HEK293T (cell line): ENCODE measurements at regions of chr19 and their contacts with region 1.

Region 1: GRCh38 chr19:50804420-50805272 is 14.4 kb downstream of the ACP4 start:
- DNase-seq: peak; percentile 97

Region 2: DNA sequence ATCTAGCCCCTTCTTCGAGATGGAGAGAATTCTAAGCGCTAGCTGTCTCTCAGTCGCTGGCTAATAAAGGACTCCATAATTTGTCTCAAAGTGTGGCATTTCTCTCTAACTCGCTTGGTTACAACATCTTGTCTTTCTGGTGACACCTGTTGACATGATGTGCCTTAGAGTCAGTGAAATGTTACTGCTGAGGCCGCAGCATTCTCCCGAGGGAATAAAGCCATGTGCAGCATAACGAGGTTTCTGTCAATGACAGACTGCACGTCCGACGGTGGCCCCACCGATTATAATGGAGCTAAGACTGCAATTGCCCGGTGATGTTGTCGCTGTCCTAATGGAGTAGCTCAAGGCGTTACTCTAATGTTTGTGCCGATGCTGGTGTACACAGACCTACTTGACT is 54.6 kb before region 1 on chr19:
- CTCF ChIA-PET with region 1: no interaction called
- POLR2A ChIA-PET with region 1: no interaction called
- DNase-seq: no peak

Region 3: DNA sequence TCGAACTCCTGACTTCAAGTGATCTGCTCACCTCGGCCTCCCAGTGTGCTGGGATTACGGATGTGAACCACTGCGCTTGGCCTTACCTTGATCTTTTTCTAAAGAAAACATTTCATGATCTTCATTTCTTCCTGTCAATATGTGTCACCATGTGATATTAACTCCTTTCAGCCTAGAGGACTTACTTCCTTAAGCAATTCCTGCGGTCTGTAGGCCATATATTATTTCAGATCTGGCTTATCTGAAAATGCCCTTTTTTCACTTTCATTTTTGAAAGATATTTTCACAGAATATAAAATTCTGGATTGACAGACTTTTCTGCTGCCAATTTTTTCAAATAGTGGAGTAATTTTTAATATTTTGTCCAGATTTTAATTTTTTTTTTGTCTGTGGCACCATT is 36.4 kb before region 1 on chr19:
- CTCF ChIA-PET with region 1: no interaction called
- POLR2A ChIA-PET with region 1: no interaction called
- DNase-seq: no peak

Region 4: DNA sequence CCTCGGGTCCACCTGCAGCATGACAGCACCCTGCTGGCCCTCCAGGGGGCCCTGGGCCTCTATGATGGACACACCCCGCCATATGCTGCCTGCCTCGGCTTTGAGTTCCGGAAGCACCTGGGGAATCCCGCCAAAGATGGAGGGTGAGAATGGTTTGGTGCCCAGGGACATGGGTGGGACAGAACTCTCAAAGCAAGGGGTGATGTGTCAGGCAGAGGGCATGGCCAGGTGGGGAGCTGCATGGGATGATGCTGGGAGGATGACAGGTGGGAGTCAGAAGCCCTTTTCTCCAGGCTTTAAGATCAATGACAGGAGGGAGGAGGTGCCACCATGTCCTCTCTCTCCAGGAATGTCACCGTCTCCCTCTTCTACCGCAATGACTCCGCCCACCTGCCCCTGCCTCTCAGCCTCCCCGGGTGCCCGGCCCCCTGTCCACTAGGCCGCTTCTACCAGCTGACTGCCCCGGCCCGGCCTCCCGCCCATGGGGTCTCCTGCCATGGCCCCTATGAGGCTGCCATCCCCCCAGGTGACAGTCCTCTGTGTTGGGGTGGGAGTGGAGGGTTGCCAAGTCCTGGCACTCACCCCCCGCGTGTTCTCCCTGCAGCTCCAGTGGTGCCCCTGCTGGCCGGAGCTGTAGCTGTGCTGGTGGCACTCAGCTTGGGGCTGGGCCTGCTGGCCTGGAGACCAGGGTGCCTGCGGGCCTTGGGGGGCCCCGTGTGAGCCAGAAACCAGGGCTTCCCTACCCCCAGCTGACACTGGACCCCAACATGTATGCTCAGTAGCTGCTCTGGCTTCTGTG is 10.0 kb before region 1 on chr19:
- CTCF ChIA-PET with region 1: interaction called, 5 read pairs
- POLR2A ChIA-PET with region 1: interaction called, 46 read pairs
- DNase-seq: no peak

Region 5: GRCh38 chr19:50820549-50821247 is 16.1 kb after region 1 on chr19:
- CTCF ChIA-PET with region 1: no interaction called
- POLR2A ChIA-PET with region 1: interaction called, 16 read pairs
- DNase-seq: no peak

Region 6: DNA sequence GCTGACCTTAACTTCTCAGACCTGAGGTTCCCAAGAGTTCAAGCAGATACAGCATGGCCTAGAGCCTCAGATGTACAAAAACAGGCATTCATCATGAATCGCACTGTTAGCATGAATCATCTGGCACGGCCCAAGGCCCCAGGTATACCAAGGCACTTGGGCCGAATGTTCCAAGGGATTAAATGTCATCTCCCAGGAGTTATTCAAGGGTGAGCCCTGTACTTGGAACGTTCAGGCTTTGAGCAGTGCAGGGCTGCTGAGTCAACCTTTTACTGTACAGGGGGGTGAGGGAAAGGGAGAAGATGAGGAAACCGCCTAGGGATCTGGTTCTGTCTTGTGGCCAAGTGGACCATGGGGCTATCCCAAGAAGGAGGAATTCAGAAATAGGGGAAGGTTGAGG is 56.4 kb after region 1 on chr19:
- CTCF ChIA-PET with region 1: no interaction called
- POLR2A ChIA-PET with region 1: no interaction called
- DNase-seq: no peak

Region 7: DNA sequence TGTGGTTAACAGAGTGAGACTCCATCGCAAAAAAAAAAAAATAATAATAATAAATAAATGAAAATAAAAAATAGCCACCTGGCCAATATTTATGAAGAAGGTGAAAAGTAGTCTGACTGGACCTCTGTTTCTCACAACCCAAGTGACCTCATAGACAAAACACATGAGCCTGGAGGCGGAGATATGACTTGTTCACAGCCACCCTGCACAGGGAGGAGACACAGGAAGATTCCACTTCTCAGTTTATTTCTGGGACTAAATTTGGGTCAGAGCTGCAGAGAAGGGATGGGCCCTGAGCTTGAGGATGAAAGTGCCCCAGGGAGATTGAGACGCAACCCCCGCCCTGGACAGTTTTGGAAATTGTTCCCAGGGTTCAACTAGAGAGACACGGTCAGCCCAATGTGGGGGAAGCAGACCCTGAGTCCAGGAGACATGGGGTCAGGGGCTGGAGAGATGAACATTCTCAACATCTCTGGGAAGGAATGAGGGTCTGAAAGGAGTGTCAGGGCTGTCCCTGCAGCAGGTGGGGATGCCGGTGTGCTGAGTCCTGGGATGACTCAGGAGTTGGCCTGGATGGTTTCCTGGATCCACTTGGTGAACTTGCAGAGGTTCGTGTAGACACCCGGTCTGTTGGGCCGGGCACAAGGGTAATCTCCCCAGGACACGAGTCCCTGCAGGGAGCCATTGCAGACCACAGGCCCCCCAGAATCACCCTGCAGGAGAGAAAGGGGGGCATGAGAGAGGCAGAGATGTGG is 138.6 kb after region 1 on chr19:
- CTCF ChIA-PET with region 1: no interaction called
- POLR2A ChIA-PET with region 1: no interaction called
- DNase-seq: no peak